Psoas muscle (tissue), 8 donors: ENCODE measurements at regions of chr6 and their contacts with region 1.

Region 1: GRCh38 chr6:170529839-170530469 is 23.2 kb downstream of the PSMB1 start:
- DNase-seq: peak; percentile 75 to 86
- ATAC-seq: peak; percentile 76 to 85 (median 82)
- H3K4me3 ChIP-seq: no peak overlapping the region
- H3K27ac ChIP-seq: peak overlapping the region; percentile 44
- H3K4me1 ChIP-seq: peaks cover 11% of the 10 kb centered on the region
- H3K27me3 ChIP-seq: no peaks in the 10 kb centered on the region
- CTCF ChIP-seq: peak; percentile 91

Region 2: DNA sequence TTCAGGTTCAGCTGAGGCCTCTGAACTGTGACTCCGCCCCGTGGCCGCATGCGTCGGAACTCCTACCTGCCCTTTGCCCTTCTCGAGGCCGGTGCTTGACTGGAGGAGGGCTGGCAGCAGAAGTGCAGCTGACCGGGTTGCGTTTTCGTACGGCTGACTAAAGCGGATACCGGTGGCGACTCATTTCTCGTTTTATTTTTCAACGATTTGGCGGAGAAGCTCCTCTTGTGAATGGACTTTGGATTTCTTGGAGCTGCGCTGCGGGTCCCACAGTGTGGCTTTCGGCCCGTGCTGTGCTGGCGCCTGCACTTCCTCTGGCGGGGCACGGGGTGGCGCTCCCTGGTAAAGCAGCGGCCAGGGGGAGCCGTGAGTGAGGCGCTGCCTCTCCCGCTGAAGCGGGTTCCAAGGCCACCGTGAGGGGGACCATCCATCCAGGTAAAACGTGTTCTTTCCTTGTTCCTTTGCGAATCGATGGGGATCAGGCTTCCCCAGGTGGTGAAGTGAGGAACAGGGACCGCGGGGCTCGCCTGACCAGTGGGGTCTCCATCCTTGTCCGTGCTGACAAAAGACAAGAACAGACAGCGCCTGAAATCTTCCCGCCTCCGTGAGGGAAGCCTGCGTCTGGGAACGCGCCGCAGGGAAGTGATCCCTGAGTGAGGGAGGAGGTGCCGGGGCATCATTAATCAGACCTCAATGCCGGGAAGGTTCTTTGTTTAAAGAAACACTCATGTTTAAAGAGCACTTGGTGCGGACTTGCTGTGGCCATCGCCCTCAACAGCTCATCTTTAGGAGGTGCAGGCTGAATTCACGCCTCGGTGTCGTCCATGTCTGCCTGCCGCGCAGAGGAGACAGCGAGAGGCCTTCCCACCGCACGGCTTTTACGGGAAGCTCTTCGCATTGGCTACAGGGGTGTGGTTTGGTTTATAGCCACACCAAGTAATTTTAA is 739.7 kb before region 1 on chr6:
- intact Hi-C with region 1: loop called in 1 of 2 experiments (anchors 5 kb)
- DNase-seq: peak; percentile 75 to 84
- ATAC-seq: peak; percentile 91 to 99 (median 95)
- H3K4me3 ChIP-seq: peak overlapping the region; percentile 67
- H3K27ac ChIP-seq: peak overlapping the region; percentile 63
- H3K4me1 ChIP-seq: peaks cover 14% of the 10 kb centered on the region
- H3K27me3 ChIP-seq: peaks cover 0 to 7% (median 2%) of the 10 kb centered on the region in 3 donors
- CTCF ChIP-seq: peak; percentile 92

Region 3: DNA sequence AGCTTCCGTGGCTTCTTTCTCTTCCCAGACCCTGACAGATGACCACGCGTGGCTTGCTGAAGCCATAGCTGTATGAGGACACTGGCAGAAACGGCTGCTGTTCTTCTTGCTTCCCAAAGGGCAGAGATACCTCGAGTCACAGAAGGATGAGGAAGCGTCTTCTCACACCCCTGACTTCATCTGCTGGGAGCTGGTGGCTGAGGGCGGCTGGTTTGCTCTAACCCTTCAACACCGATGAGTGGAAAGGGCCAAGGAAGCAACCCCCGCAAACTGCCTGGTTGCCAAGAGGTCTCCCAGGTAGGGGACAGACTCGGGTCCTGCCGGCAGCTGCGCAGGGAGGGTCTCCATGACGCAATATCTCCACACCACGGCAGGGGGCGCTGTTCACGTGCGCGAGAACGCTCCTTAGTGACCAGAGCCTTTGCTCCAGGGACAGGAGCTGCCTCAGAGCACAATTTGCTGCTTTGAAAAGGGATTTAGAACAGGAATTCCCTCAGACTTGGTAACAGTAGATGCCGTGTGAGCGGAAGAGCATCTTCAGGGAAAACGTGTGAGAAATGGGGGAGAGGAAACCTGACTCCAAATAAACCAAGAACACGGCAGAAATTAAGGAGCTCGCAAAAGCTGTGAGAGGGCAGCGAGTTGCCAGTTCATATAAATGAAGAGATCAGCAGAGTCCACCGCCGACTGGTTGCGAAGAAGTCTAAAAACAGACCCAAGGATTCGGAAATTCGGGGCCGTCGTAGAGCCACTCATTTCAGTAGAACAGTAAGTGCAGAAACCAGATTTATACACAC is 698.3 kb before region 1 on chr6:
- intact Hi-C with region 1: loop called (anchors 2 to 5 kb)
- DNase-seq: peak; percentile 69 to 84
- ATAC-seq: peak; percentile 87 to 98 (median 93)
- H3K4me3 ChIP-seq: no peak overlapping the region
- H3K27ac ChIP-seq: no peak overlapping the region
- H3K4me1 ChIP-seq: no peaks in the 10 kb centered on the region
- H3K27me3 ChIP-seq: peaks cover 0 to 15% (median 0%) of the 10 kb centered on the region in 3 donors
- CTCF ChIP-seq: peak; percentile 94

Region 4: GRCh38 chr6:169959136-169960002 is 570.6 kb before region 1 on chr6:
- intact Hi-C with region 1: loop called in 1 of 2 experiments (anchors 10 kb)
- DNase-seq: no peak
- ATAC-seq: no peak
- H3K4me3 ChIP-seq: no peak overlapping the region
- H3K27ac ChIP-seq: no peak overlapping the region
- H3K4me1 ChIP-seq: no peaks in the 10 kb centered on the region
- H3K27me3 ChIP-seq: peaks cover 0 to 33% (median 0%) of the 10 kb centered on the region in 3 donors
- CTCF ChIP-seq: no peak

Region 5: DNA sequence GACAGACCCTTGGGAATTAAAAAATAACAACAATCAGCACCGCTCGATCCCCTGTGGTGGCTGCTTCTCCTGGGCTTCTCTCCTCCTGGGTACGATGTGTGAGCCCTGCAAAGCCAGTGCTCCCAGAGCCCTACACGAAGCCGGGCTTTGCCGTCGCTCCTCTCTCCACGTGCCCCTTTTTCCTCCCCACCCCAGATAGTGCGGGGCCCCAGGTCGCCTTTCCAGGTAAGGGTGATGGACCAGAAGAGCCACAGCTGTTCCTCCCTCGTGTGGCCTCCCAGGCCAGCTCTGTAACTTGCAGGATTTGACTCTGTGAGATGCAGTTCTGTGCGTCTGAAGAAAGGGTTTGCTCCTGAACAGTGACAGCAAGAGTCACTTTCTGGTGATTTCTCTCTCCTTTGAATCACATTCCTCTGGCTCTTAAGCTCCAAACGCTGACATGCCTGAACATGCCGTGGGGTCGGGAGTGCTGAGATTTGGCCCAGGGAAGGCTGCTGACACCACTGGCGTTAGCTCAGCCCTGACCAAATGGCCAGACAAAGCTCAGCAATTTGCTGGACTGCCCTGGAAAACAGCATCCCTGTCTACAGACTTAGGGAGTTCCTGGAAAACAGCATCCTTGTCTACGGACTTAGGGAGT is 298.3 kb before region 1 on chr6:
- intact Hi-C with region 1: no loop called
- DNase-seq: no peak
- ATAC-seq: no peak
- H3K4me3 ChIP-seq: no peak overlapping the region
- H3K27ac ChIP-seq: no peak overlapping the region
- H3K4me1 ChIP-seq: peaks cover 23% of the 10 kb centered on the region
- H3K27me3 ChIP-seq: no peaks in the 10 kb centered on the region
- CTCF ChIP-seq: no peak

Region 6: DNA sequence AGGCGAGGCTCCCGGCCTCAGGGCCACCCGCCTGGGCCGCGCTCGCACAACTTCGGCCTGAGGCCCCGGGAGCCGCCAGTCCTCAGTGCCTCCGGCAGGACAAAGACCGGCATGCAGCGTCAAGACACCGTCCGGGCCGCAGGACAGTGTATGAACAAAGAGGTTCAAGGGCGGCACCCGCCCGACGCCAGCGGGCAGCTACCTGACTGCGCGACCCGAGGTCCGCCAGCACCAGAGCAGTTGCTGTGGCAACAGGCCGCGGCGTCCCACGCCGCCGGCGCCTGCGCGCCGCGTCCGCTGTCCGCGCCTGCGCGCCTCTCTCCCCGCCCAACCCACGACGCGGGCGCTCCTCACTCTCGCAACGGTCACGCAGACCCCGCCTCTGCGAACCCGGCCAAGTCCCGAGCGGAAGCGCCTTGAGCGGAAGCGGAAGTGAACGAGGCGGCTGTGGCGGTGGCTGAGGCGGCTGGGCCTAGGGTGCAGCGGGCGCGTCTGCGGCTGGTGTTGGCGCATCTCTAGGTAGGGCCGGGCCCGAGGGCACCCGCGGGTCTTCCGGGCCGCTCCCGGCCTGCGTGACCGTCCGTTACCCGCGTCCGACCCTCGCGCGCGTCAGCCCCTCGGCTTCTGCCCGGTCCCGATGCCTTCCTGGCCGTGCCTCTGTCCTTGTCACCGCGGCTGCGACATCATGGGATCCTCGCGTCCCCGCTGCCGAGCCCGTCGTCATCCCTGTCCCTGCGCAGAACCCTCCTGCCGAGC is 223.5 kb before region 1 on chr6 and contains the start of gene FAM120B:
- intact Hi-C with region 1: loop called in 1 of 2 experiments (anchors 10 kb)
- DNase-seq: peak; percentile 97 to 99
- ATAC-seq: peak; percentile 98 to 99 (median 98)
- H3K4me3 ChIP-seq: peak within 1 kb of the TSS; percentile 96
- H3K27ac ChIP-seq: peak within 1 kb of the TSS; percentile 97
- H3K4me1 ChIP-seq: peaks cover 37% of the 10 kb centered on the region
- H3K27me3 ChIP-seq: no peaks in the 10 kb centered on the region
- CTCF ChIP-seq: no peak
- total RNA-seq, gene FAM120B: 17.2 to 24.2 (median 23.7) TPM

Region 7: DNA sequence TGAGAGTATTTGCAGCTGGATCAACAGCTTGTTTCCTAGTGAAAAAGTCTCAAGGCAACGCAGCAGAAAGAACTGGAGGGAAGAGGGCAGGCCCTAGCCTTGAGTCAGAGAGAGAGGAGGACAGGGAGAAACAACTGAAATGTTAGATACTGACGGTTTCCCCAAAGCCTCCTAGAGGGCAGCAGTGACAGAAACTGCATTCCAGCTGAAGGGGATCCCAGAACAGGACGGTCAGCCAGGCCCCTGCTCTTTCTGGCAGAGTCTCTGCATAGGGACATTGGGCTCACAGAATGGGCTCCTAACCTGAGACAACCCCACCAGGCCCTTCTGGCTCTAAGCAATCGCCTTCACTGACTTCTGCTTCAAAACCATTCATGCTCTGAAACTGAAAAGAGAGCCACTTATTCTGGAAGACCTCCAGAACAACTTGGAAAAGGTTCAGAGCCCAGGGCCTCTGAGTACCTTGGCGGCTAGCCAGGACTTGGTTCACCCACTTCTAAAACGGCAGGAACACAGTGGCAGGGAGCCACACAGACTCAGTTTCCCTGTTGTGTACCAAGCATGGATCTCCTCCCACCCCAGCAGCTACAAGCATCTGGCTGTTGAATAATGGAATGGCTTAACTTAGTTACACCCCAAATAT is 49.8 kb before region 1 on chr6:
- intact Hi-C with region 1: no loop called
- DNase-seq: no peak
- ATAC-seq: peak; percentile 39 to 82 (median 68)
- H3K4me3 ChIP-seq: no peak overlapping the region
- H3K27ac ChIP-seq: no peak overlapping the region
- H3K4me1 ChIP-seq: no peaks in the 10 kb centered on the region
- H3K27me3 ChIP-seq: no peaks in the 10 kb centered on the region
- CTCF ChIP-seq: no peak